Caco-2 (cell line): ENCODE measurements at regions of chr6 and their contacts with region 1.

Region 1: DNA sequence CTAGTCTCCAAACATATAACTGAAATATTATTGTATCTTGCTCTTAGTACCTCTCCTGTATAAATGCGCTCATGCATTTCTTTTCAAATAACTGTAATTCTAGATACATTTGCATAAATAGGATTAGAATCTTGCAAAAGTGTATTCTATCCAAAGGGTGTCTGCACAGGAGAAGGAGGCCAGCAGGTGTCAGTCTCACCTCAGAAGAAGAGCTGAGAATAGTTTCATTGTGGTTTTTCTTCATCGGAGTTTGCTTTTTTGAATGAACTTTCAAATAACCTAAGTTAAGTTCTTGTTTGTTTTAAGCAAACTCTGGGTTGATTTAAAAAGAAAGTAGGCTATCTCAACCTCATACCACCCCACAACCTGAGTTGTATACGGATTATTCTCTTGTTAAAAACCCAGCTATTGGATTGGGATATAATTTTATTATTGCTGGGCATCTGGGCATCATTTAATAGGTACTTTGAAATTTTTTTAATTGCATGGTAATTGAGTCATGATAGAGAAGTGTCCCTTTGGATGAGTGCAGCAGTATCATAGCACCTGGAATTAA is 125.0 kb upstream of the MLIP start:
- DNase-seq: peak; percentile 46 to 56
- H3K4me3 ChIP-seq: no peak overlapping the region
- H3K4me3 Mint-ChIP-seq: no peak overlapping the region
- H3K27ac Mint-ChIP-seq: no peak overlapping the region
- H3K4me1 ChIP-seq: no peaks in the 10 kb centered on the region
- H3K4me1 Mint-ChIP-seq: peaks cover 9% of the 10 kb centered on the region
- H3K27me3 ChIP-seq: no peaks in the 10 kb centered on the region; the same call in 1 of the 2 replicates
- H3K27me3 Mint-ChIP-seq: no peaks in the 10 kb centered on the region
- CTCF ChIP-seq: peak; percentile 72 to 85

Region 2: DNA sequence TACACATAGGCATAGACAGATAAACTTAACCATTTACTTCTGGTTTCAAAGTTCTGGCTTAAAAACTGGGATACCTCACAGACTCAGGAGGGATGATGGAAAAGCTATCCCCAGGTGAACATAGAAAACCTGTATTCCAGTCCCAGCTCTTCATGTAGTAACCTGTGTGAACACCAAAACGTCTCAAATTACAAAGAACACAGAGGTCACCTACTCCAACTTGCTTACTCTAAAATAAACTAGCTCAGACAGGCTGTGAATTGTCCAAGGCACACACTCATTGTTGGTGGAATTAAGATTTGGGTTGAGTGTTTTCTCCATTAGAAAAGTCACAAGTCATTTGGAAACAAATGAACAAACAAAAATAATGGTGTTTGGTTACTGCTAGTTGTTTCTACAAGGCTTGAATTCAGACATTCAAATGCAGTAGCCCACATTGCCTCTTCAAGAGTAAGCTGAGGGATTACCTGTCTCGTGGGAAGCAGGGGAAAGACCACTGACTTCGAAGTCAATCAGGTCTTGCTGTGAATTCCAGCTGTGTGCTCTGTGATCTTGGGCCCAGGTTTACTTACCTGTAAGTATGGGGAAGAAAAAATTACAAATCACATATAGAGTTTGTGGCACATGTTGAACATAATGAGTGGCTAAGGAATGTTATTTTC is 239.7 kb before region 1 on chr6:
- CTCF ChIA-PET with region 1: no interaction called
- POLR2A ChIA-PET with region 1: no interaction called
- intact Hi-C with region 1: no loop called
- DNase-seq: no peak
- H3K4me3 ChIP-seq: no peak overlapping the region
- H3K4me3 Mint-ChIP-seq: no peak overlapping the region
- H3K27ac Mint-ChIP-seq: no peak overlapping the region
- H3K4me1 ChIP-seq: peaks cover 43% of the 10 kb centered on the region
- H3K4me1 Mint-ChIP-seq: peaks cover 40% of the 10 kb centered on the region
- H3K27me3 ChIP-seq: no peaks in the 10 kb centered on the region
- H3K27me3 Mint-ChIP-seq: no peaks in the 10 kb centered on the region
- CTCF ChIP-seq: no peak

Region 3: DNA sequence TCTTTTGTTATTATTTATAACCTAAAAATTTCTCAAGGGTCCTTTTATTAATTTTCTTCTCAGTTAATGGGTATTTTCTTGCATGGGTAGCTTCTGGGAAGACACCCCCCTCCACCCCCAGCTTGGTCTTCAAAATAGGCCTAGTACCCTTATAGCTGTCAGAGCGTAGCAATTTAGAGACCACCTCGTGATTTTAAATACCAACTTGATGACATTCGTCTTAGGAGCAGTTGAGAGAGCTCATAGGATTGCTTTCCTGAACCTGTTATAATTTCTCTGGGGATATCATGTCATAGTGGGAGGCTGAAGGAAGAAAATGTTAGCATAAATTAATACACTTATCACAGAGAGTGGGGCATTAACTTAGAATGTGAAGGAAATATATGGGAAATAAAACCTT is 41.9 kb after region 1 on chr6:
- CTCF ChIA-PET with region 1: interaction called, 6 read pairs
- POLR2A ChIA-PET with region 1: no interaction called
- intact Hi-C with region 1: loop called (anchors 1 kb)
- DNase-seq: no peak
- H3K4me3 ChIP-seq: no peak overlapping the region
- H3K4me3 Mint-ChIP-seq: no peak overlapping the region
- H3K27ac Mint-ChIP-seq: no peak overlapping the region
- H3K4me1 ChIP-seq: no peaks in the 10 kb centered on the region
- H3K4me1 Mint-ChIP-seq: no peaks in the 10 kb centered on the region
- H3K27me3 ChIP-seq: no peaks in the 10 kb centered on the region
- H3K27me3 Mint-ChIP-seq: peaks cover 4% of the 10 kb centered on the region
- CTCF ChIP-seq: no peak

Region 4: GRCh38 chr6:54248994-54249393 is 262.8 kb after region 1 on chr6:
- CTCF ChIA-PET with region 1: interaction called, 5 read pairs
- POLR2A ChIA-PET with region 1: no interaction called
- intact Hi-C with region 1: loop called (anchors 5 kb)
- DNase-seq: no peak
- H3K4me3 ChIP-seq: no peak overlapping the region
- H3K4me3 Mint-ChIP-seq: no peak overlapping the region
- H3K27ac Mint-ChIP-seq: no peak overlapping the region
- H3K4me1 ChIP-seq: no peaks in the 10 kb centered on the region
- H3K4me1 Mint-ChIP-seq: no peaks in the 10 kb centered on the region
- H3K27me3 ChIP-seq: no peaks in the 10 kb centered on the region
- H3K27me3 Mint-ChIP-seq: no peaks in the 10 kb centered on the region
- CTCF ChIP-seq: no peak

Region 5: DNA sequence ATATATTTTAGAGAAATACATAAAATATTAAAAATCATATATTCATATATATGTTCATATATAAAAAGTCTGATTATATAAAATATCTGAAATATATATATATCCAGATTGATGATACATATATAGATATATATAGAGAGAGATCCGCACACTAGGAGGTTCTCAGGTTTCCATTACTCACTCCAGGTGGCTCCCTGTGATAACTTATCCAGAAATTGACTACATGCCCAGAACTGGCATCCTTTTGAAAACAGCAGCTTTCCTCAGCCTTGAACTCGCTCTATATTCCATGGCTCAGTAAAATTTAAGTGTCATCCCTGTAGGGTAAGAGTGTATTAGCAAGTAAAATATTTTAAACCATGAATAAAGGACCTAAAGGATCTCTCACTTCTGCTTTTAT is 528.8 kb after region 1 on chr6:
- CTCF ChIA-PET with region 1: no interaction called
- POLR2A ChIA-PET with region 1: no interaction called
- intact Hi-C with region 1: no loop called
- DNase-seq: peak in 1 of 2 experiments; percentile 7
- H3K4me3 ChIP-seq: no peak overlapping the region
- H3K4me3 Mint-ChIP-seq: no peak overlapping the region
- H3K27ac Mint-ChIP-seq: no peak overlapping the region
- H3K4me1 ChIP-seq: no peaks in the 10 kb centered on the region
- H3K4me1 Mint-ChIP-seq: no peaks in the 10 kb centered on the region
- H3K27me3 ChIP-seq: no peaks in the 10 kb centered on the region
- H3K27me3 Mint-ChIP-seq: no peaks in the 10 kb centered on the region
- CTCF ChIP-seq: no peak

Region 6: DNA sequence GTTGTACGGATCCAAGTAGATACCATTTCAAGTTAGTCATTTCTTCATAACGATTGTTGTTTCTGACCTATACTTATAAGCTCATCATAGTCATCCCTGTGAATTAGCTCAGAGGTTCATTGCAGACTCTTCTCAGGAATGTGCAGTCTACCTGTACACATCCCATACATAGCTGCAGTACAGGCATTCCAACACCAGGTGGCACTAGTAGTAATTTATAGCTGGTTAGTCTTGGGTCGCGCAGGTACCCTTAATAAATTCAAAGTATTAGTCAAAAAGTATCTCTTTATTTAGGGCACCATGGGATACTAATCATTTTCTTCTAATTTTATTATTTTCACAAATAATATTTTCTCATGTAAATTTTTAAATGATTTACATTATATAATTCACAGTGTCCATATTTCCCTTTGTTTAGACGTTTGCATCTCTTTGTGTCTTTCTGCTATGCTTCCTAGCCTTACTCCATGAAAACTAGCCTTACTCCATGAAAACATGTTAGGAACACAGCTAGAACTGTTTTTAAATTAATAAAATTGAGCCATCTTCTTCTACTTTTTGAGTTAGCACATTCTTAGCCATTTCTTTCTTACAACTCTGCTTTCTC is 731.7 kb after region 1 on chr6:
- CTCF ChIA-PET with region 1: no interaction called
- POLR2A ChIA-PET with region 1: no interaction called
- intact Hi-C with region 1: loop called (anchors 10 kb)
- DNase-seq: peak; percentile 78 to 82
- H3K4me3 ChIP-seq: no peak overlapping the region
- H3K4me3 Mint-ChIP-seq: no peak overlapping the region
- H3K27ac Mint-ChIP-seq: no peak overlapping the region
- H3K4me1 ChIP-seq: no peaks in the 10 kb centered on the region
- H3K4me1 Mint-ChIP-seq: peaks cover 19% of the 10 kb centered on the region
- H3K27me3 ChIP-seq: no peaks in the 10 kb centered on the region
- H3K27me3 Mint-ChIP-seq: no peaks in the 10 kb centered on the region
- CTCF ChIP-seq: peak; percentile 69 to 74

Region 7: DNA sequence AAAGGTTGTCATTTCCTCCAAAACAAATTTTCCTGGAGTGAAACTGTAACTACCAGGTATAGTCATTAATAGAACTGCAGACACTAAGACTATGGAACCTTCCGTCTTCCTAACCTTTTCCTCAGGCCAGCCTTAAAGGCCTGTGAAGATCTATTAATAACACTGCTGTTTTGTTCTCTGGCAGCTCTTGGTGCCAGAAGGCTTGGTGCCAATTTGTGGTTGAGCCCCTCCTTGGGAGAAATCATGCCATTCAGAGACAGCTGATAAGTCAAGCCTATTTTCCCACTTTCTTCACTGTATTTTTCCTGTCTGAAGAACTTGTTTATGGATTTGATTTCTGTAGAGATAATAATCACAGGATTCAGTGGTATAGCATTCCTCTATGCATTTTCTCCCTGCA is 1252.9 kb after region 1 on chr6:
- CTCF ChIA-PET with region 1: no interaction called
- POLR2A ChIA-PET with region 1: no interaction called
- intact Hi-C with region 1: loop called (anchors 5 kb)
- DNase-seq: no peak
- H3K4me3 ChIP-seq: no peak overlapping the region
- H3K4me3 Mint-ChIP-seq: no peak overlapping the region
- H3K27ac Mint-ChIP-seq: no peak overlapping the region
- H3K4me1 ChIP-seq: no peaks in the 10 kb centered on the region
- H3K4me1 Mint-ChIP-seq: peaks cover 5% of the 10 kb centered on the region
- H3K27me3 ChIP-seq: no peaks in the 10 kb centered on the region
- H3K27me3 Mint-ChIP-seq: no peaks in the 10 kb centered on the region
- CTCF ChIP-seq: no peak